ENCODE measurements at regions of chr4 and their contacts with region 1.

Region 1: GRCh38 chr4:1329408-1330371 is 17.3 kb upstream of the UVSSA start:
- DNase-seq: peak; percentile 51 to 77 (median 57)
- H3K4me3 ChIP-seq: no peak overlapping the region
- H3K4me3 Mint-ChIP-seq: peak overlapping the region; percentile 26 to 88 (median 82)
- H3K27ac ChIP-seq: peak overlapping the region; percentile 47
- H3K27ac Mint-ChIP-seq: peak overlapping the region; percentile 86 to 100 (median 97)
- H3K4me1 ChIP-seq: peaks cover 46% of the 10 kb centered on the region
- H3K4me1 Mint-ChIP-seq: peaks cover 18 to 53% (median 32%) of the 10 kb centered on the region in 4 donors
- H3K27me3 ChIP-seq: no peaks in the 10 kb centered on the region
- H3K27me3 Mint-ChIP-seq: no peaks in the 10 kb centered on the region

Region 2: DNA sequence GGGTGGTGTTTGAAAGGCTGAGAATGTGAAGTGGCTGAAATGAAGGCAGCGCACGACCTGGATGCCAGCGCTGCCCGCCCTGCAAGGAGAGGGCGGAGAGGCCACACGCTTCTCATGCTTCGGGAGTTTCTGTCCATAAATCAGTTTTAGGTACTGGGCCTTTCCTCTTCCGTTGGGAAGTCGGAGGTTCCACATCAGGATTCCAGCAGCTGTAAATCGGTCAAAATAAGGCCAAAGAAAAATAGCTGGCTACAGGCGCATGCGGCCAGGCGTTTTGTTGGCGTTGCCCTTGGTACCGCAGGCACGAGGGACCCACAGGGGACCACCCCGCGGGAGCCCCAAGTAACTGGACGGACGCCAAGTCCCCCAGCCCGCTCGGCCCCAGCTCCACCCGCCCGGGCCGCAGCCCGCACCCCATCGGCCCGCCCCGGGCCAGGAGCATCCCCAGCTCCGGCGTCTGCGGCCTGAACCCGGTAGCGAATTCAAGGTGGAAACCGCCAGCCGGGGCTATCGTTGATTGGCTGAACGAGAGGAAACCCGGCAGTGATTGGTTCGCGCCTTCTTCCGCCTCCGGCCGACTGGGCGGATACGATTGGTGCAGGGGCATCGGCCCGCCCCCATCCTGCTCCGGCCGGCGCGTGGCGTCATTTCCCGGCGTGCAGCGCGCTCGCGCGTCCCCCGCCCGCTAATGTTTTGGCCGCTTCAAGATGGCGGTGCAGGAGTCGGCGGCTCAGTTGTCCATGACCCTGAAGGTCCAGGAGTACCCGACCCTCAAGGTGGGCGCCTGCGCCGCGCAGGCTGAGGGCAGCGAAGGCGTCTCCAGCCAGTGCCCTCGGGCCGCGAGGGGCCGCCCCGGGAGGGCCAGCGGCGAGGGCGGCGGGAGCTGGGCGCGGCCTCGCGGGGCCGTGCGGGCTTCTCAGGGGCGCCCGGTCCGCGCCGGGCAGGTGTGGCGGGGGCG is 40.2 kb before region 1 on chr4 and contains the start of gene MAEA:
- CTCF ChIA-PET with region 1: no interaction called
- POLR2A ChIA-PET with region 1: interaction called, 37 read pairs
- intact Hi-C with region 1: loop called (anchors 1 kb)
- DNase-seq: peak; percentile 97
- H3K4me3 ChIP-seq: peak within 1 kb of the TSS; percentile 78 to 86
- H3K4me3 Mint-ChIP-seq: peak within 1 kb of the TSS; percentile 90 to 94 (median 92)
- H3K27ac ChIP-seq: peak within 1 kb of the TSS; percentile 76
- H3K27ac Mint-ChIP-seq: peak within 1 kb of the TSS; percentile 82 to 97 (median 95)
- H3K4me1 ChIP-seq: peaks cover 49% of the 10 kb centered on the region
- H3K4me1 Mint-ChIP-seq: peaks cover 25 to 48% (median 39%) of the 10 kb centered on the region in 4 donors
- H3K27me3 ChIP-seq: no peaks in the 10 kb centered on the region
- H3K27me3 Mint-ChIP-seq: no peaks in the 10 kb centered on the region
- total RNA-seq, gene MAEA: 101 to 106 TPM

Region 3: DNA sequence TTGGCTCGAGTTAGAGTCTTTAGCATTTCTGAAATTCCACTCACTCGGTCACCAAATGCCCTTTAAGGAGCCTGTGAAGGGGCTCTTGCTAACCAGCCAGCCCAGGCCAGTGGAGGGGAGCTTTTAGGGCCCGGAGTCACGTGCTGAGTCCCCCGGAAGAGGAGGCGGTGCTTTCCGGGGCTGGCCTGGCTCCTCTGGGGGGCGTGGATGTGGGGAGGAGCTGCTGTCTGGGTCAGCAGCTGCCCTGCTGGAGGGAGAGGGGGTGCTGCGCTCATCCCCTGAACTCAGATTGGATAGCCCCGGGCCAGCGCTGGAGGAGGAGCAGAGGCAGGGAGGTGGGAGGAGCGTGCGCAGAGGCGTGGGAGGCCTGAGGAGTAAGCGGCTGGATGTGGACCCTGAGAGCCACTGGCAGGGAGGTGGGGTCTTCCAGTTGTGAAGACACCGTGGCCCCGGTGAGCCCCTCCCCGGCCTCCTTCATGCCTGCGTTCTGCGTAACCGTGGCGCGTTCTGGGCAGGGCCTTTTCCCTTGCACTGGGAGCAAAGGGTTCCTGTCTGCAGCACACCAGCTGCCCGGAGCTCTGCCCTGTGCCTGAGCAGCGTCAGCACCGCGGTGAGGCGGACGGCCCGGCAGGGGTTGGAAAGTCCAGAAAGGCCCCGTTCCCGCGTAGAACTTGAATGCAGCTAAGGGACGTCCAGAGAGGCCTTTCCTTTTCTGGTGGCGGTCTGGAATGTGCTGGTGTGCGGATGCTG is 20.3 kb before region 1 on chr4:
- CTCF ChIA-PET with region 1: no interaction called
- POLR2A ChIA-PET with region 1: interaction called, 32 read pairs
- intact Hi-C with region 1: no loop called
- DNase-seq: peak in 4 of 5 donors; percentile 34 to 72 (median 42)
- H3K4me3 ChIP-seq: peak overlapping the region; percentile 33 to 39
- H3K4me3 Mint-ChIP-seq: peak overlapping the region; percentile 51 to 84 (median 80)
- H3K27ac ChIP-seq: peak overlapping the region; percentile 36
- H3K27ac Mint-ChIP-seq: peak overlapping the region; percentile 61 to 89 (median 83)
- H3K4me1 ChIP-seq: peaks cover 64% of the 10 kb centered on the region
- H3K4me1 Mint-ChIP-seq: peaks cover 48 to 77% (median 62%) of the 10 kb centered on the region in 4 donors
- H3K27me3 ChIP-seq: no peaks in the 10 kb centered on the region
- H3K27me3 Mint-ChIP-seq: no peaks in the 10 kb centered on the region

Region 4: GRCh38 chr4:1340181-1340747 is 10.6 kb after region 1 on chr4:
- CTCF ChIA-PET with region 1: interaction called, 21 read pairs
- POLR2A ChIA-PET with region 1: interaction called, 93 read pairs
- intact Hi-C with region 1: no loop called
- DNase-seq: peak in 1 of 5 donors; percentile 27
- H3K4me3 ChIP-seq: no peak overlapping the region
- H3K4me3 Mint-ChIP-seq: no peak overlapping the region
- H3K27ac ChIP-seq: no peak overlapping the region
- H3K27ac Mint-ChIP-seq: no peak overlapping the region
- H3K4me1 ChIP-seq: peaks cover 8% of the 10 kb centered on the region
- H3K4me1 Mint-ChIP-seq: peaks cover 13 to 30% (median 18%) of the 10 kb centered on the region in 4 donors
- H3K27me3 ChIP-seq: no peaks in the 10 kb centered on the region
- H3K27me3 Mint-ChIP-seq: no peaks in the 10 kb centered on the region